GM12878 (cell line): ENCODE measurements at regions of chr17 and their contacts with region 1.

Region 1: DNA sequence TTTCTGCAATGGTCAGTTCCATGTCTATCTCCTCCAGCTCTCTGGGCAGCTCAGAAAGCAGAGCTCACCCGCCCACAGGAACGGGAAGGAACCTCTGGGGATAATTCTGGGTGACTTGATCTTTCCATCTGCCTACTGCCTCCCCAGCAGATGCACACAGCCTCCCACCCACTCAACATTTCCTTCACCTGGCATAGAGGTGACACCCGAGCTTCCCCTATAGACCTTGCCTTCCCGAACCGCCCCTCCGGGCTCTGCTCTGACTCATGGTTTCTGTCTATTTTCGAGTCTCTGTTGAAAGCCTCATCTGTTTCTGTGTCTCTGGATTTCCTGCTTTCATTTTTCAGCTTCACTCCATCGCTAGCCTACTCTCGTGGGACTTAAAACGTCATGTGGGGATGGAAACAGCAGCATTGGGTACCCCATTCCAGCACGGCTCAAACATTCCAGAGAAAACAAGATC is 11.4 kb downstream of the GGA3 start:
- DNase-seq: peak; percentile 79
- ATAC-seq: peak; percentile 98
- H3K4me3 ChIP-seq: peak overlapping the region; percentile 66
- H3K27ac ChIP-seq: peak overlapping the region; percentile 70
- H3K4me1 ChIP-seq: peaks cover 27% of the 10 kb centered on the region
- H3K27me3 ChIP-seq: no peaks in the 10 kb centered on the region
- CTCF ChIP-seq: no peak
- EP300 ChIP-seq: 0 out of 4 replicates have a peak, but pooled peaks of 1 of the 2 experiments have one; percentile 11
- POLR2A ChIP-seq: no peak
- RAD21 ChIP-seq: no peak

Region 2: GRCh38 chr17:75238684-75239191 is 11.3 kb before region 1 on chr17:
- CTCF ChIA-PET with region 1: interaction called, 34 read pairs
- POLR2A ChIA-PET with region 1: no interaction called
- RAD21 ChIA-PET with region 1: no interaction called
- SMC1A ChIA-PET with region 1: interaction called, 6 read pairs
- in situ Hi-C with region 1: no loop called
- intact Hi-C with region 1: no loop called
- DNase-seq: no peak
- ATAC-seq: peak; percentile 96
- H3K4me3 ChIP-seq: no peak overlapping the region
- H3K27ac ChIP-seq: no peak overlapping the region
- H3K4me1 ChIP-seq: peaks cover 28% of the 10 kb centered on the region
- H3K27me3 ChIP-seq: no peaks in the 10 kb centered on the region
- CTCF ChIP-seq: peak; percentile 83 to 94 (median 89)
- EP300 ChIP-seq: no peak
- POLR2A ChIP-seq: peak; percentile 71
- RAD21 ChIP-seq: peak; percentile 67